HEK293T (cell line): ENCODE measurements at regions of chr1 and their contacts with region 1.

Region 1: GRCh38 chr1:6579374-6580118 is at the start of gene ZBTB48:
- DNase-seq: peak; percentile 100

Region 2: DNA sequence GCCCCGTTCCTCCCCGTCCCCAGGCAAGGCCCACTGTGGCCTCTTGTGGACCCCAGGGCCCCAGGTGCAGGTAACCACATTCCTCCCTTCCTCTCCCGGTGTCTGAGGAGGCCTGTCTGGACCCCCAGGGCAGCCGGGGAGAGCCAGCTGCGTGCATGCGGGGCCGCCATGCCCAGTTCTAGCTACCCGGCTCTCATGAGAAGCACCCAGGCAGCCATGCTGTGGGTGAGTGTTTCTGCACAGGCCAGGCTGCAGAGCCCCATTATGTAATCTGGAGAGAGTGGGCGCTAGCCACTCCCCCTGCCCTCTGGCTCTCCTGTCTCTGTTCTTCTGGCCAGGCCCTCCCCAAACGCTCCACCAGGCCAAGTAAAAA is 69.6 kb before region 1 on chr1:
- CTCF ChIA-PET with region 1: no interaction called
- POLR2A ChIA-PET with region 1: no interaction called
- DNase-seq: no peak

Region 3: GRCh38 chr1:6554031-6554906 is 25.3 kb before region 1 on chr1 and contains the start of gene NOL9:
- CTCF ChIA-PET with region 1: interaction called, 5 read pairs
- POLR2A ChIA-PET with region 1: interaction called, 11 read pairs
- DNase-seq: peak; percentile 97

Region 4: GRCh38 chr1:8537991-8538390 is 1958.4 kb after region 1 on chr1:
- CTCF ChIA-PET with region 1: interaction called, 11 read pairs
- POLR2A ChIA-PET with region 1: no interaction called
- DNase-seq: no peak